Right ventricle myocardium inferior (tissue), 1 donor: ENCODE measurements at regions of chr7 and their contacts with region 1.

Region 1: GRCh38 chr7:120941064-120941463 is 9.5 kb upstream of the ING3 start:
- DNase-seq: no peak
- ATAC-seq: no peak

Region 2: DNA sequence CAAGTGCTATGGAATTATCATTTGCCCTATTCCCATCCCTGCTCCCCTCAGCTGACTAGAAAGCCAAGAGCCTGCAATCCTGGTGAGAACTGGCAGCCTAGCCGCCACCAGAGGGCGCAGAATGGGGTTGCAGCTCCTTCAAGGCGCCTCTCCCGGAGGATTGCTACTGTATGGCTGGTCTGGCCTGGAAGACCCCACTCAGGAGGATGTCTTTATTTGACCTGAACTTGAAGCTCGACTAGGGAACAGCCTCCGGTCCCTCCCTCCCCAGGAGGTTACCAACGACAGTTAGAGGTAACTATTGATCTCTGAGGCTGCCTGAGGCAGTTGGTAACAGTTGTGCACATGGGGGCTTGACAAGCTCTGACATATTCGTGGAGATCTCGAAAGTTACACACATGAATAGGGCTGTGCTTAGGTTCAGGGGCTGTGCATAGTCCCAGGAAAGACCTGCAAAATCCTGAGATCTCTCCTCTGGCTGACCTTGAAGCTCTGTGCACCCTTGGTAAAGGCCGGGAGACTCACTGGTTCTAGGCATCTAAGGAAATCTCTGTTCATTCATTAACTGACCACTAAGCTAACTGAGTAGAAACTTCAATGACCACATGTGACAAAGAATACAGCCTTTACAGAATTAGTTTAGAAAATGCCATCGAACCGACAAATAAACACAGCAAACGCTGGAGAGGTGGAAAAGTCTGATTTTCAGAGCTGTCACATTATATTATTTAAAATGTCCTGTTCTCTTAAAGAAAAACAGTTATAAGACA is 148.8 kb before region 1 on chr7:
- intact Hi-C with region 1: loop called (anchors 5 kb)
- DNase-seq: peak; percentile 78
- ATAC-seq: peak; percentile 78

Region 3: GRCh38 chr7:120805636-120806388 is 135.3 kb before region 1 on chr7:
- intact Hi-C with region 1: loop called (anchors 2 kb)
- DNase-seq: no peak
- ATAC-seq: no peak